Right ventricle myocardium inferior (tissue), 1 donor: ENCODE measurements at regions of chr12 and their contacts with region 1.

Region 1: GRCh38 chr12:96219698-96220206 is 25.6 kb downstream of the ELK3 start:
- DNase-seq: no peak
- ATAC-seq: no peak

Region 2: DNA sequence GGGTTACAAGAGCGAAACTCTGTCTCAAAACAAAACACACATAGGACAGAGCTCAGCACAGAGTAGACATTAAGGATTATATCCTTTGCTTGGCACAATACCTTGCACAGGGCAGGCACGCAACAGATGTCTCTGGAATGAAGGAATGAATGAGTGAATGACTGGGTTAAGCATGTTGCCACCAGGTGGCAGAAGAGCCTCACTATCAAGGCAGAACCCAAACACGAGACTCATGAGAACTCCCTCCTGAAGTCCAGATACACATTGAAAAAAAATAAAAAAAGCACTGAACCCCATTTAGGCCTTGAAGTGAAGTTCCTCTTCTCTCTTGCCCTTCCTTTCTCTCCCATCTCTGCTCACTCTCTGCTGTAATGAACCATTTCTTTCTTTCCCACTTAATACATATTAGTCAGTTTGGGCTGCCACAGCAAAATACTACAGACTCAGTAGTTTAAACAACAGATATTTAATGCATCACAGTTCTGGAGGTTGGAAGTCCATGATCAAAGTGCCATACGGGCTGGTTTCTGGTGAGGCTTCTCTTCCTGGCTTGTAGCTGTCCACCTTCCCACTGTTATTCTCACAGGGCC is 157.8 kb before region 1 on chr12:
- intact Hi-C with region 1: loop called (anchors 2 kb)
- DNase-seq: no peak
- ATAC-seq: peak; percentile 82

Region 3: DNA sequence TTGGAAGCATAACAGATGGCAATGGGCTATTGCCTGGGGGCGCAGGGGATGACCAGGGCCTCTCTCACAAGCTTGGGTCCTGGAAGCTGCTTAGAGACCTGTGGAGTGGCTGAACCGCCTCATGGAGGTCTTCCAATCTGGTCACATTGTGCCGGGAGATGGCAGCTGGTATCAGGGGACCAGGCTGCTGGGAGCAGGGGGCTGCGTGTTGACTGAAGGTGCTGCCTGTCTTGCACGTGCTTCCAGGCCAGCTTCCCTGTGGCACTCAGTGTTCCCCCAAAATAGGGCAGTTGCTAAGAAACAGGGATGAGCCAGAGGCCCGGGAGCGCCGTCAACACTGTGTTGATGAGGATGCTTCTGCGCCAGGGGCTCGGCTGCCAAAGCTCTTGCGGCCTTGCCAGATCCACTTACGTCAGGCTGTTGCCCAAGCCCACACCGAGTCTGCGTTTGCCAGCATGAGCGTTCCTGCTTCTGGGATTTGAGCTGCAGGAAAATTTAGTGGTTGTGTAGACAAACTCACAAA is 14.2 kb after region 1 on chr12:
- intact Hi-C with region 1: loop called (anchors 1 kb)
- DNase-seq: peak; percentile 95
- ATAC-seq: peak; percentile 88

Region 4: GRCh38 chr12:96239711-96240635 is 20.2 kb after region 1 on chr12:
- intact Hi-C with region 1: loop called (anchors 1 kb)
- DNase-seq: peak; percentile 76
- ATAC-seq: peak; percentile 64

Region 5: DNA sequence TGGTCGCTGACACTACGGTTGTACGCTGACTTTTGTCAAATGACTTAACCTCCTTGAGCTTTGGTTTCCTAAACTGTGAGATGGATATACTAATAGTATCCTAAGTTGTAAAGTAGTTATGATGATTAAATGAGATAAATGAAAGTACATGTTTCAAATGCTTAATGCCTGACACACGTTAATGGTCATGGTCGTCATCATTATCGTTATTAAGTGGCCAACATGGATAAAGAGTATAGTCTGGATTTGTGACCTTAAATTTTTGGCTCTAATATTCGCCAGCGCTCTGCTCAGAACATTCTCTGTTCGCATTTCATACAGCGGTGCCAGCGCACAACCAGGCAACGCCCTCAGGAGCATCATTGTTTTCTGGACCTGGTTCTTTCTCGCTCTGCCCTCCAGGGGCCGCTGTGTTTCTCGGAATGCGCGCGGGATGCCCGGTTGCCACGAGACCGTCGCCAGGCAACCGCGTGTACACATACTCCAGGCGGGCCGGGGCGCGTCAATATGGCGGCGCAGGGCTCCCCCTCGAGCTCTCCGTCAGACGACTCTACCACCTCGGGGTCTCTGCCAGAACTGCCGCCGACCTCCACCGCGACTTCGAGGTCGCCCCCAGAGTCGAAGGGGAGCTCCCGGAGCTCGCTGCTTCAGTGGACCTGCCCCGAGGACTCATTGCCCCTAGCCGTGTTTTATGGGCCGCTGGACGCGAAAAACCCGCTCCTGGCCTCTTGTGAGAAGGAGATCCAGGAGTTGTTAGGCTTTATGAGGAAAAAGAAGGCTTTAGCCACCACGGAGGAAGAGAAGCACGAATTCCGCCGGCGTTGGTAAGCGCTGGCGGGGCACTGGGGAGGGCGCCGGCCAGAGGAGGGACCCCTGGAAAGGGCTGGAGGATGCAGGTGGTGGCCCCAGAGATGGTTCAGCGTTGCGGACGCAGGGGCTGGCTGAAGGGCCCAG is 269.6 kb after region 1 on chr12 and contains the start of gene CFAP54:
- intact Hi-C with region 1: loop called (anchors 10 kb)
- DNase-seq: peak; percentile 98
- ATAC-seq: peak; percentile 99
- total RNA-seq, gene CFAP54: 0.22 TPM